PC-9 (cell line): ENCODE measurements at regions of chr6 and their contacts with region 1.

Region 1: DNA sequence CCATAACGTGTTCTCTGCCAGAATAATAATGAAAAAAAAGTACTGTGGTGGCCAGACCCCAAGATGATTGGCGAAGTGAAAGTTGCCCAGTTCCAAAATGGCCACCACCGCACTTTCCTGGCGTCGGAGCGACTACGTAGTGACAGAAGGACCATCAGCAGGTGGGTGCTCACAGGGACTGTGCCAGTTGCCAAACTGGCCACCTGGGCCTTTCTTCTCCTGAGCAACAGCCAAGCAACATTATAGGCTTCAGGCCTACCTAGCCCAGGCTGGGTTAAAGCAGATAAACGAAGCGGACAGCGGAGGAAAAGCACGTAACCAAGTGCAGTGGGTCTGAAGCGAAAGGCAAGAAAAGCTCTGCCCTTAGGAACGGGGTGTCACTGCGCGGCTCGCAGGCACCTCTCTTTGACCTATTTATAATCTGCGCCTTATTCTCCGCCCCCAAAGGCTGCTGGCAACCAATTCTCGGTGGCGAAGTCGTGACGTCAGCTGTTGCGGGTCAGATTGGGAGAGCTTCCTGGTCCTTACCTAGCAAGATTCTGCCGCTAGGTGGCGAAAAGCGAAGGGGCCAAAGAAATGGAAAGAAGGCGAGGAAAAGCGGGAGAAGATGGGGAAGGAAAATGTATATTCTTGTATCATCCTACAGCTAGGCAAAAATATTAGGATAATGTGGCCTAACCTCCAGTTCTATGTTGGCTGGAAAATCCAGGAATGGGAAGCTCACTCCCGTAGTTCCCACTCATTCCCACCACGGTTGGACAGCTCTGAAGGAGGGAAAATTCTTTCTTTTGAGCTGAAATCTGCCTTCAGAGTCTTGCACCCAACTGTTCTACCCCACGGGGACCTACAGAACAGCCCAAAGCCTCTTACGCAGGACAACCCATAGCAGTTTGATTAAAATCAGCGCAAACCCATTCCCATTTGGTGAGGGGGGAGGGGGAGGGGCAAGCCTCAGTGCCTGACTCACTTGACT is 6.9 kb upstream of the MOG start:
- DNase-seq: peak; percentile 94 to 97
- H3K4me3 ChIP-seq: peak overlapping the region; percentile 81
- H3K27ac ChIP-seq: peak overlapping the region; percentile 66
- H3K4me1 ChIP-seq: peaks cover 3% of the 10 kb centered on the region; the same call in 1 of the 2 replicates
- H3K27me3 ChIP-seq: no peaks in the 10 kb centered on the region
- CTCF ChIP-seq: peak; percentile 89

Region 2: DNA sequence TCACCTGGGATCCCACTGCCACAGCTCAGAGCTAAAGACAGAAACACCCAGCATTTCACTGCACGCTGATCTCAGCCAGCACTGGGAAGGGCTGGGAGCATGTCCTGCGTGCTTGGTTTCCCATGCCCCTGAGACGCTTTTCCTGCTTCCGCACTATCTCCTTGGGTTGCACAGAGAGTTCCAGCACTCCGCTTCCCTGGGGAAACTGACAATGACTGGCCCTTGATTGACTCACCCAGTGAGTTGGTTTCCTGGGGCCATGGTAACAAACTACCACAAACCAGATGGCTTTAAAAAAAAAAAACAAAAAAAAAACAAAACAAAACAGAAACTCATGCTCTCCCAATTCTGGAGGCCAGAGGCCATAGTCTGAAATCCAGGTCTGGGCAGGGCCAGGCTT is 147.4 kb before region 1 on chr6:
- CTCF ChIA-PET with region 1: no interaction called
- POLR2A ChIA-PET with region 1: no interaction called
- intact Hi-C with region 1: no loop called
- DNase-seq: no peak
- H3K4me3 ChIP-seq: no peak overlapping the region
- H3K27ac ChIP-seq: no peak overlapping the region
- H3K4me1 ChIP-seq: no peaks in the 10 kb centered on the region
- H3K27me3 ChIP-seq: peaks cover 12% of the 10 kb centered on the region; the same call in 1 of the 2 replicates
- CTCF ChIP-seq: no peak

Region 3: GRCh38 chr6:29632789-29633533 is 17.0 kb before region 1 on chr6 and contains the start of gene GABBR1:
- CTCF ChIA-PET with region 1: interaction called, 9 read pairs
- POLR2A ChIA-PET with region 1: interaction called, 11 read pairs
- intact Hi-C with region 1: no loop called
- DNase-seq: peak; percentile 65 to 93
- H3K4me3 ChIP-seq: peak within 1 kb of the TSS; percentile 68
- H3K27ac ChIP-seq: no peak within 1 kb of the TSS
- H3K4me1 ChIP-seq: peaks cover 5% of the 10 kb centered on the region; the same call in 1 of the 2 replicates
- H3K27me3 ChIP-seq: no peaks in the 10 kb centered on the region
- CTCF ChIP-seq: no peak
- total RNA-seq, gene GABBR1: 36.3 and 43.6 TPM in 2 replicates

Region 4: DNA sequence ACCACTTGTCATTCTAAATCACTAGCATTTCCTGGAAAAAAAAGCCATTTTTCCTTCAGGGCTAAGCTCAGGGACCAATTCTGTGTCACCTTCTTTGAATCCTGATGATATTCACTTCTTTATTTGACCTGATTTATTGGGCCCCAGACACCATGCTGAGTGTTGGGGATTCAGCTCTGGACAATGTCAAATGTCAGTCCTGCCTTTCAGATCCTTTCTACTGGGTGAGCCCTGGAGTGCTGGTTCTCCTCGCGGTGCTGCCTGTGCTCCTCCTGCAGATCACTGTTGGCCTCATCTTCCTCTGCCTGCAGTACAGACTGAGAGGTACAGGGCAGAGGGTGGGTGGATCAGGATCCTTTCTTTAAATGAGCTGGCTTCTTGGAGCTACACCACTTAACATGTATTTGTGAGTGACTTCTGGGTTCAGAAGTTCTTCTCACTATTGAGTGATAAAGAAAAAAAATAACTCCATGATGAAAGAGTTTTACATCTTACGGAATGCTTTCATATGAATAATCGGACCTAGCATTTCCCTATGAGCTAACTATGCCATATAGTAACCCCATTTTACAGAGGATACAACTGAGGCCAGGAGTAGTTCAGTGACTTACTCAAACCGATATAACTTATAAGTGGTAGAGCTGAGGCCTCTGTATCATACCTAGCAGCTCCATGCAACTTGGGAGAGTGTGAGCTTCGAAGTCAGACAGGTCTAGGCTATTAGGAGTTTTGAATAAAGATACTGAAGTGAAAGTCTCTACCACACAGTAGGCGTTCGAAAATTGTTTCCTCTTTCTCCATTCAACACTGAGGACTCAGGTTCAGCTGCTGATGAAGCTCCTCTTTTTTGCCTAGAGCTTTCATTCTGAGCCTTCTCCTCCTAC is 16.2 kb after region 1 on chr6:
- CTCF ChIA-PET with region 1: interaction called, 18 read pairs
- POLR2A ChIA-PET with region 1: no interaction called
- intact Hi-C with region 1: no loop called
- DNase-seq: no peak
- H3K4me3 ChIP-seq: no peak overlapping the region
- H3K27ac ChIP-seq: no peak overlapping the region
- H3K4me1 ChIP-seq: 0 out of 2 replicates have a peak, but pooled peaks cover 7% of the 10 kb centered on the region
- H3K27me3 ChIP-seq: no peaks in the 10 kb centered on the region
- CTCF ChIP-seq: no peak

Region 5: DNA sequence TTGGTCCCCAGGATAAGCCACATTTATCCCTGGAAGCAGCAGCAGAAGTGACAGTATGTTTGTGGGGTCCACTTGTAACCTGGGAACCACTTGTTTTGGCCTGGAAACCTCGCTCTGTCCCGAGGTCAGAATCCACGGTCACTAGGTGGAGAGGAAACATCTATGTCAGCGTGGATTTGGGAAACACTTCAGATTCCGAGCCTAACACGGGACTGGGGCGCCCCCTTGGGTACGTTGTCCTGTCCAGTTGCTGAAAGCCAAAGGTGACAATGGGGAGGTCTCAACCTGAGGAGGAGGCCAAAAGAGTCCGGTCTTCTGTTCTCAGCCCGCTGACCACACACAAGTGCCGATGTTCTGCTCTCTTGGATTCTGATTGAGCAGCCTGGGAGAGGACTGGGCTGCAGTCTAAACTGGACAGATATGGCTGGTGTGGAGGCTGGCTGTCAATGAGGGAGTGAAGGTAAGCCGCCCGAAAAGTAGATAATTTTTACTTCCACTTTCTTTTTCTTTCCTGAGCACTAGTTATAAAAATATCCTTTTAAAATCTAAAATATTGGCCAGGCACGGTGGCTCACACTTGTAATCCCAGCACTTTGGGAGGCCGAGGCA is 35.8 kb after region 1 on chr6:
- CTCF ChIA-PET with region 1: interaction called, 13 read pairs
- POLR2A ChIA-PET with region 1: no interaction called
- intact Hi-C with region 1: loop called (anchors 1 kb)
- DNase-seq: peak in 1 of 2 experiments; percentile 53
- H3K4me3 ChIP-seq: no peak overlapping the region
- H3K27ac ChIP-seq: no peak overlapping the region
- H3K4me1 ChIP-seq: no peaks in the 10 kb centered on the region
- H3K27me3 ChIP-seq: no peaks in the 10 kb centered on the region
- CTCF ChIP-seq: 0 out of 2 replicates have a peak, but pooled peaks have one; percentile 33

Region 6: DNA sequence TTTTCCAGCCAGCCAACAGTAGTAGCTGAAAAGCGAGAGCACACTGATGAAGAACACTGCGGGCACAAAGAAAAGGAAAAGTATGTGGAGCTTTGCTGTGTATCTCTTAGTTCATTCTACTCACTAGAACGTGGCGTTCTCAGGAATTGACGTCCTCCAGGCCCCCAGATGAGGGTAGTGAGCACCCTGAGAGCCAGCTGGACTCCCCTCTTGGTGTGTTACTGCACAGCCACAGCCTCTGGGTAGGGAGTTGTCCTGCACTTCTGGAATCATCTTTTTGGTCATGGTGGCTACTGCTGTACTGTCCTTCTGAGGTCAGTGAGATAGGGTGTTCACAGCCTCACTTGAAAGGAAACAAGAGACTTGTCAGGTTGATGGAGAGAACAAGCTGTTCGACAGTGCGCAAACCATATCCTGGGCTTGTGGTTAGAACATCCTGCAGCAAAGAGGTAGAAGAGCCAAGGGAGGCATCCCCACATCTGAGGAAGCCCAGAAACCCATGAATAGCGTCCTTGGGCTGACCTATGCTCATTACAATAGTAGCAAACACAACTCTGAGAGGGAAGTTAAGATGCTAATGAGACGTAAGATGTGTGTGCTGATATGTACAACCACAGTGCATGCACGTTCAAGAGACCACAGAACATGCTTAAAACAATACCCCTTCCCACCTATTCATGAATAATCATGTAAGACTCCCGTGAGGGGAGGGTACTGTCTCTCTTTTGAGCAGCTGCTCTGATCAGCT is 58.6 kb after region 1 on chr6:
- CTCF ChIA-PET with region 1: no interaction called
- POLR2A ChIA-PET with region 1: no interaction called
- intact Hi-C with region 1: no loop called
- DNase-seq: no peak
- H3K4me3 ChIP-seq: no peak overlapping the region
- H3K27ac ChIP-seq: no peak overlapping the region
- H3K4me1 ChIP-seq: no peaks in the 10 kb centered on the region
- H3K27me3 ChIP-seq: peaks cover 11% of the 10 kb centered on the region; the same call in 1 of the 2 replicates
- CTCF ChIP-seq: no peak

Region 7: DNA sequence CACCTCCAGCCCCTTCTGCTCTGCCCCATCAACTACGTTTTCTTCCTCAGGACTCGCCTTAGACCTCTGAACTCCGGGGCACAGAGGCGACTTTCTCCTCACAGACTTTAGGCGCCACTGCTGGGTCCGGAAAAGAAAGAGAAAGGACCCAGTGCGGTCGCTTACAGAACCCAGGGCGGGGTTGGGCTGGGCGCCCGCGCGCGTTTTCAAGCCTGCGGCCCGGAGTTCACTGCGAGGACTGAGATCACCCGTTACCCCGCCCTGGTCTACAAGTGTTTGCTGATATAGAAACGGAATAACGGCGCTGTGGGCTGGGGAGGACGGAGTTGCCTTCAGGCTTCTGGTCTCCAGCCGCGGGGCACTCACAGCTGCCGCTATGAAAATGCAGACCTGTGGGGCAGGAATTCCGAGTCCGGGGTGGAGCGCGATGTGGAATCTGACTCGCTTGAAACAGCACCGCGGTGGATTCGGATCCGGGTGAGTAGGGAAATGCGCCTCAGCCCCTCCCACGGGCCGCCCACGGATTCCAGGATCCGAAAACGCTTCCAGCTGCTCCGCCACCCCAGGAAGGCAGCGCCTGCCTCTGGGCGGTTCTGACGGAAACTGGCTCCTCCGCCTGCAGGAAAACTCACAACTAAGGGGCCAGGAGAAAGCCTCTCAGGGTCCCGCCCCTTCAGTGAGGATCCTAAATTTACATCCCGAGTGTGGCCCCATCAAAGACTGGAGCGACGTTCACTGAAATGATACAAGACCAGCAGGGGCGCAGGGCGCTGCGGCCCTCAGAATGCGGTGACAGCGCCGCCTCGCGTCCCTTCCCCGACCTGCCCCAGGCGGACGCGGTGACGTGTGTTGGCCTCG is 102.7 kb after region 1 on chr6:
- CTCF ChIA-PET with region 1: interaction called, 9 read pairs
- POLR2A ChIA-PET with region 1: no interaction called
- intact Hi-C with region 1: loop called (anchors 2 kb)
- DNase-seq: peak; percentile 77 to 92
- H3K4me3 ChIP-seq: peak overlapping the region; percentile 52
- H3K27ac ChIP-seq: no peak overlapping the region
- H3K4me1 ChIP-seq: peaks cover 18% of the 10 kb centered on the region
- H3K27me3 ChIP-seq: no peaks in the 10 kb centered on the region
- CTCF ChIP-seq: peak; percentile 83

Region 8: DNA sequence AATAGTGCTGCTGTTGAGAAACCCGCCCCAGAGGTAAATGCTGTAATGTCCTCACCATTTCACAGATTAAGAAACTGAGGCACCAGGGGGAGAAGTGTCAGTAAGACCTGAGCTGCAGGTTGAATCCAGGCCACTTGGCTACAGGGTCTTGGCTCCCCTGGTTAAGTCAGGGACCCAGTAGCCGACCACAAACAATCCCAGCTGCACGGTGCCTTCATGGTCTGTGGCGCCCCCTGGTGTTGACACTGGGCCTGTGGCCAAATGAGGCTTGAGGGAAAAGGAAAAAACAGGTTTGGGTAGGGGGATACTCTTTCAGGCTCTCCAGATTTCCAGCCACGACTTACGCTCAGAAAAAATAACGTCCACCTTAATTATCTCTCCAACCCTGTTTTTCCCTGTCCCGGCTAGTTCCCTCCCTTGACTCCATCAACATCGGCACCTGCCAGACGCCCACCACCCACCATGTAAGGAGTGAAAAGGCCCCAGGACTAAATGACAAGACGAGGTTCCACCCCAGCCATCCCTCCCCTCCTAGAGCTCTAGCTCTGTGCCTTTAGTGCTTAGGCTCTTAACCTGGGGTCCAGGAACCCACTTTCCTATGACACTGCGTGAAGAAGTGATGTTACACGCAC is 363.4 kb after region 1 on chr6:
- CTCF ChIA-PET with region 1: no interaction called
- POLR2A ChIA-PET with region 1: no interaction called
- intact Hi-C with region 1: loop called (anchors 10 kb)
- DNase-seq: no peak
- H3K4me3 ChIP-seq: no peak overlapping the region
- H3K27ac ChIP-seq: no peak overlapping the region
- H3K4me1 ChIP-seq: no peaks in the 10 kb centered on the region
- H3K27me3 ChIP-seq: no peaks in the 10 kb centered on the region
- CTCF ChIP-seq: peak; percentile 88

Region 9: GRCh38 chr6:30227763-30228487 is 577.9 kb after region 1 on chr6:
- CTCF ChIA-PET with region 1: no interaction called
- POLR2A ChIA-PET with region 1: no interaction called
- intact Hi-C with region 1: no loop called
- DNase-seq: no peak
- H3K4me3 ChIP-seq: no peak overlapping the region
- H3K27ac ChIP-seq: no peak overlapping the region
- H3K4me1 ChIP-seq: no peaks in the 10 kb centered on the region
- H3K27me3 ChIP-seq: peaks cover 19% of the 10 kb centered on the region; the same call in 1 of the 2 replicates
- CTCF ChIP-seq: no peak